Tibial artery (tissue), 4 donors: ENCODE measurements at regions of chr5 and their contacts with region 1.

Region 1: DNA sequence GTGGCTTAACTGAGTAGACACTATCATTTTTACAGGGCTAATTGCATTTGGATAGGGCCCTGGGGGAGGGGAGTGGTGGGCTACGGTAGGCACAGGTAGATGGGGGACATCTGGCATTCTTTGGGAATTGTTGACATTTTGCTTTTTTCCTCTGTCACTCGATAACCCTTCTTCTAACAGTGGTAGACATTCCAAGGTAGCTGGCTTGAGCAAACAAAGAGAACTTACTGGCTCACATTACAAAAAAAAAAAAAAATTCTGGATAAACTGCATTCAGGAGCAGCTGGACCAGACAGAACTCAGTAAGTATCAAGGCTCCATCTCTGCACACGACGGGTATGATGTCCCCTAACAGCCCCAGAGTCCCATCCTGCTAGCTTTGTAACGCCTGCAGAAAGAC is 585.2 kb downstream of the ZNF608 start:
- DNase-seq: no peak
- H3K4me3 ChIP-seq: no peak overlapping the region
- H3K27ac ChIP-seq: no peak overlapping the region
- H3K4me1 ChIP-seq: no peaks in the 10 kb centered on the region
- H3K27me3 ChIP-seq: no peaks in the 10 kb centered on the region
- CTCF ChIP-seq: no peak

Region 2: DNA sequence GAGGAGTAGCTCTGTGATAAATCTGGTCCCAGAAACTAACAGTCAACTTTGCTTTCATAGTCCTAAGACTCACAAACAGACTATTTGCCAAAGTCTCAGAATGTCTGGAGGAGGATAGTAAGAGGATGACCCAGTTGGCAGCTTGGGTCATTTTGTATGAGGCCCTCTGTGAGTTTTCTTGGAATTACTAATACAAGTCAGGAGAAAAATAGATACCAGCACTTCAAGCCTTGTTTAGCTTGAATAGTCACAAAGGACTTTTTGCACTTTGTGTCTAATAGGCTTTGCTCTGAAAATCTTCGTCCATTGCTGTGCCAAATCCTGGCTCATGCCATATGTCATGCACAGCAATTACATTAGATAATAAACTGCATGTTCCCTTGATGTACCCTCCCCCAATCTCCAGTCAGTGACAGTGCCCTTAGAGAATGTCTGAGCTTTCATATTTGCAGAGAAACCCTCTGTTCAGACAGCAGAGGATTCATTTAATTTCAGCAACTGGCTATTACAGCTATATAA is 36.5 kb before region 1 on chr5:
- intact Hi-C with region 1: no loop called
- DNase-seq: no peak
- H3K4me3 ChIP-seq: no peak overlapping the region
- H3K27ac ChIP-seq: no peak overlapping the region
- H3K4me1 ChIP-seq: peaks cover 0 to 9% (median 0%) of the 10 kb centered on the region in 4 donors
- H3K27me3 ChIP-seq: no peaks in the 10 kb centered on the region
- CTCF ChIP-seq: no peak

Region 3: GRCh38 chr5:124180875-124181461 is 19.7 kb after region 1 on chr5:
- intact Hi-C with region 1: loop called (anchors 1 kb)
- DNase-seq: no peak
- H3K4me3 ChIP-seq: no peak overlapping the region
- H3K27ac ChIP-seq: no peak overlapping the region
- H3K4me1 ChIP-seq: peaks cover 0 to 10% (median 2%) of the 10 kb centered on the region in 4 donors
- H3K27me3 ChIP-seq: no peaks in the 10 kb centered on the region
- CTCF ChIP-seq: no peak